ENCODE measurements at regions of chr1 and their contacts with region 1.

Region 1: GRCh38 chr1:155834296-155834926 is 22.6 kb downstream of the GON4L start:
- DNase-seq: peak; percentile 64 to 94 (median 77)
- ATAC-seq: peak; percentile 94
- H3K4me3 ChIP-seq: peak overlapping the region; percentile 45
- H3K27ac ChIP-seq: peak overlapping the region; percentile 90
- H3K4me1 ChIP-seq: peaks cover 20 to 26% of the 10 kb centered on the region in 2 experiments
- H3K27me3 ChIP-seq: no peaks in the 10 kb centered on the region
- CTCF ChIP-seq: no peak
- EP300 ChIP-seq: peak; percentile 31
- POLR2A ChIP-seq: peak; percentile 81
- RAD21 ChIP-seq: no peak

Region 2: GRCh38 chr1:155801149-155801548 is 33.3 kb before region 1 on chr1:
- CTCF ChIA-PET with region 1: no interaction called
- POLR2A ChIA-PET with region 1: interaction called, 10 read pairs
- in situ Hi-C with region 1: no loop called
- intact Hi-C with region 1: no loop called
- DNase-seq: no peak
- ATAC-seq: no peak
- H3K4me3 ChIP-seq: no peak overlapping the region
- H3K27ac ChIP-seq: no peak overlapping the region
- H3K4me1 ChIP-seq: no peaks in the 10 kb centered on the region
- H3K27me3 ChIP-seq: no peaks in the 10 kb centered on the region
- CTCF ChIP-seq: no peak
- EP300 ChIP-seq: no peak
- POLR2A ChIP-seq: no peak
- RAD21 ChIP-seq: no peak

Region 3: GRCh38 chr1:155867766-155868165 is 33.4 kb after region 1 on chr1:
- CTCF ChIA-PET with region 1: no interaction called
- POLR2A ChIA-PET with region 1: no interaction called
- in situ Hi-C with region 1: no loop called
- intact Hi-C with region 1: no loop called
- DNase-seq: peak in 1 of 4 experiments; percentile 45
- ATAC-seq: peak; percentile 80
- H3K4me3 ChIP-seq: no peak overlapping the region
- H3K27ac ChIP-seq: no peak overlapping the region
- H3K4me1 ChIP-seq: no peaks in the 10 kb centered on the region; a peak in 1 of 5 replicates
- H3K27me3 ChIP-seq: no peaks in the 10 kb centered on the region; a peak in 1 of 5 replicates
- CTCF ChIP-seq: 0 out of 6 replicates have a peak, but pooled peaks of 1 of the 3 experiments have one; percentile 11
- EP300 ChIP-seq: no peak
- POLR2A ChIP-seq: no peak
- RAD21 ChIP-seq: peak in 1 of 2 experiments; percentile 17; a peak in 1 of 4 replicates

Region 4: GRCh38 chr1:155911156-155912055 is 77.0 kb after region 1 on chr1 and contains the start of gene RIT1:
- CTCF ChIA-PET with region 1: no interaction called
- POLR2A ChIA-PET with region 1: interaction called, 7 read pairs
- in situ Hi-C with region 1: no loop called
- intact Hi-C with region 1: loop called (anchors 5 kb)
- DNase-seq: peak; percentile 91 to 95 (median 94)
- ATAC-seq: peak; percentile 95
- H3K4me3 ChIP-seq: peak within 1 kb of the TSS; percentile 48
- H3K27ac ChIP-seq: peak within 1 kb of the TSS; percentile 73
- H3K4me1 ChIP-seq: peaks cover 3 to 7% of the 10 kb centered on the region in 2 experiments; a peak in 2 of 5 replicates
- H3K27me3 ChIP-seq: no peaks in the 10 kb centered on the region
- CTCF ChIP-seq: peak in 1 of 3 experiments; percentile 12; a peak in 1 of 6 replicates
- EP300 ChIP-seq: no peak
- POLR2A ChIP-seq: peak; percentile 50; the same call in 1 of the 2 replicates
- RAD21 ChIP-seq: no peak
- polyA plus RNA-seq, gene RIT1: 53.7 to 57.1 TPM